ENCODE measurements at regions of chr20 and their contacts with region 1.

Region 1: GRCh38 chr20:56551571-56551970 is 18.5 kb downstream of the FAM209B start:
- DNase-seq: no peak
- H3K4me3 Mint-ChIP-seq: no peak overlapping the region
- H3K27ac Mint-ChIP-seq: no peak overlapping the region
- H3K4me1 Mint-ChIP-seq: peaks cover 8% of the 10 kb centered on the region
- H3K27me3 Mint-ChIP-seq: no peaks in the 10 kb centered on the region

Region 2: DNA sequence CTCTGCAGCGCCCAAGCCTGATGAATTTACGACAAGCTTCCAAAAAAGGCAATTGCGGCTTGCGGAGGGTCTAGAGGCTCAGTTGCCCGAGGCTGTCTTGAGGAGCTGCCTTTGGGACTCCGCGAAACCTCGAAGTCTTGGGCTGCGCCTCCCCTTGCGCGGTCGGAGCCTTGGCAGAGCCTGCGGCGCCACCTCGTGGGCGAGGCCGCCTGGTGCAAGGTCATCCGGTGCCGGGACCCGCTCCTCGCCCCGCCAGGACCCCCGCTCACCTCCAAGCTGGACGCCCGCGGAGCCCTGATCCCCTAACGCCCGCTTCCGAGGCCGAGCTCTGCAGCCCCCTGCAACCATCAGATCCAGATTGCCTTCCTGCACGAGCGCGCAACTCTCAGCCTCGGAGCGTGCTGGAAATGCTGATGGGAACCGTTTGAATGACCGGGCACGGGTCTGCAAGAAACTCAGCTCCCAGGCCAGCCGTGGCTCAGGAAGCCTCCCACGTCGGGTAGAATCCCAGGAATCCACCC is 207.7 kb before region 1 on chr20:
- CTCF ChIA-PET with region 1: no interaction called
- POLR2A ChIA-PET with region 1: no interaction called
- DNase-seq: peak; percentile 47
- H3K4me3 Mint-ChIP-seq: no peak overlapping the region
- H3K27ac Mint-ChIP-seq: no peak overlapping the region
- H3K4me1 Mint-ChIP-seq: peaks cover 3% of the 10 kb centered on the region
- H3K27me3 Mint-ChIP-seq: peaks cover 58% of the 10 kb centered on the region

Region 3: DNA sequence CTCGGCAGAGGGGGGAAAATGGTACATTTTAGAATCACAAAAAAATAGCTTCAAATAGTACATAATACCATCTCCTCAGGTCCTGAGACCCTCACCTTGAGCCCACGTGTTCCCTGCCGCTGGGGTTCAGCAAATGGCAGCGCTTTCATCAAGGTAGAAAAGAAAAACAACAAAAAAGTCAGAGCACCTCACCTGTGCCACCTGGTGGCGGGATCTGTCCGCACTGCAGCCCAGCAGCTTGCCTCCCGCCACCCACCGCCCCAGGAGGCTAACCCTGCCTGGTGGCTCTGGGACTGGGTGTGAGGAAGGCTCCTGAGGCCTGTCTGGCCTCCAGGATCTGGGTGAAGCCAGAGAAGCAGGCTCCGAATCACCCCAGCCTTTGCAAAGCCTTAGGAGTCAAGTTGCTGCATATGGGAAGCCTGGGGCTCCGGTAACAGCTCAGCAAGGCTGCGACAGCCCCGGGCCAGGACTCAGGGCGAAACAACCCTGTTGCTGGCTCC is 444.1 kb after region 1 on chr20:
- CTCF ChIA-PET with region 1: interaction called, 10 read pairs
- POLR2A ChIA-PET with region 1: no interaction called
- DNase-seq: no peak
- H3K4me3 Mint-ChIP-seq: no peak overlapping the region
- H3K27ac Mint-ChIP-seq: no peak overlapping the region
- H3K4me1 Mint-ChIP-seq: no peaks in the 10 kb centered on the region
- H3K27me3 Mint-ChIP-seq: no peaks in the 10 kb centered on the region